Posterior vena cava (tissue), 2 donors: ENCODE measurements at regions of chr3 and their contacts with region 1.

Region 1: GRCh38 chr3:139173372-139174108 is 128.8 kb upstream of the PRR23C start:
- DNase-seq: no peak

Region 2: DNA sequence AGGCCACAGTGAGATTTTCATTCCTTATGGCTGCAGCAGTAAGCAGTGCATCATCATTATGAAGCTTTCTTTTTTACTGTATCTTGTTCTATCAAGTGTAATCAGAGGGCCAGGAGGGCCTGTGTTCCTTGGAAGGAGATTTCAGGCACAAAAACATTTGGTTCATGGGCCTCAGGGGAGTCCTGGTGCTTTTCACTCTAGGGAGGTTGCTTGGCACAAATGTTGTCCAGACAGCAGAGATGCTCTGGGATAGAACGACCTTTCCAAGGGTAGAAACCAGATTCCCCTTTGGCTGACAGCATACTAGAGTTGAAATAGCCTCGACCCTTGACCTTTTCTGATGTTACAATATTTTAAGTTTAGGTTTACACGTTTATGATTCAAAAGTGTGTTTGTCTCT is 666.1 kb after region 1 on chr3:
- intact Hi-C with region 1: loop called in 1 of 2 experiments (anchors 5 kb)
- DNase-seq: no peak